ENCODE measurements at regions of chr20 and their contacts with region 1.

Region 1: DNA sequence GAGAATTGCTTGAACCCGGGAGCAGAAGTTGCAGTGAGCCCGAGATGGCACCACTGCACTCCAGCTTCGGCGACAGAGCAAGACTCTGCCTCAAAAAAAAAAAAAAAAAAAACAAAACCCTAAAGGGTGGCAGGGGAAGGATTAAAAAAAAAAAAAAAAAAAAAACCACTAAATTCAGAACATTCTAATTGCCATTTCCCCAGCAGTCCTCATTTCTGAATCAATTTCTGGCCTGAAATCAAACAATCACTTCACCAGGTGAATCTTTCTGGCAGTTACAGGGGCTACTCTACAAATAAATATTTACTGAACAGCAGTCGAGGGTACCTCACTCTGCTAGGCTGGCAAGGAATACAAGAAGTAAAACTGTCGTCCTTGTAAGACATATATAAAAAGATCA is 1.2 kb downstream of the UQCC1 start:
- DNase-seq: no peak
- ATAC-seq: no peak
- H3K4me3 Mint-ChIP-seq: peak overlapping the region; percentile 91
- H3K27ac Mint-ChIP-seq: peak overlapping the region; percentile 100
- H3K4me1 Mint-ChIP-seq: peaks cover 21% of the 10 kb centered on the region
- H3K27me3 Mint-ChIP-seq: no peaks in the 10 kb centered on the region

Region 2: DNA sequence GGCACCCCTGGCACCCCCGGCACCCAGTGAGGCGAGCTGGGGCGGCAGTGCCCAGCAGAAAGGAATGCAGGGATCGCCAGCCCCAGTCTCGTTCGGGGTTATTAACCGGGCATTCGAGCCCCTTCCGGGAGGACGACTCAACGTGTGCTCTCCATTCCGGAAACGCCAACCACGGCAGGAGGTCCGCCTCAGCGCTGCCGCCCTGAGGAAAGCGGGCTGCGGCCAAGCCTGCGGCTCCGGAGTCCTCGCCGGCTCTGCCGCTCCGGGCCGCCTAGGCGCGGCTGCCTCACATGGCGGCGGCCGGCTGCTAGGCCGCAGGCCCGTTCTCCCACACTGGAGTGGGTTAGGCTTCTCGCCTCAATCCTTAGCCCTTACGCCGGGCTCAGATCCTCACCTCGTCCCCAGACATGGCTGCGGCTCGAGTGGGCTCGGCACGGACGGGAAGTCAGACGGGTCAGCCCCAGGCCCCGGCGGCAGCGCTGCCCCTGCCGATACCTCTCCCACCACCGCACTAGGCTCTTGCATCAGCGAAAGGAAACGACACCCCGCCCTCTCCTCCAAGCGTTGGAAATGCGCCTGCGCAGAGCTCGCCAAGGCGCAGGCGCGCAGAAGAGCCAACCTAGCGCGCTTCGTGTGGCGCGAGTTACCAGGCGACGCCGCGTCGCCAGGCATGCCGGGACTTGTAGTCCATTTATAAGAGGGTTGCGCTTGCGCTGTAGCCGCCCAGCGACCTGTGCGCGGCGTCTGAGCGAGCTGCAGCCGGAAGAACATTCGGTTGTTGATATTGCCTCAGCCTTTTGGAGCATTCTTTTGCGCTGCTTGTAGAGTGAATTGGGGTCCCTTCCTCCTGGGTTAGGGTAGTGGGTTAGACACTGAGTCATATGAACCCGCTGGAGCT is 1298.7 kb before region 1 on chr20 and contains the start of gene EIF2S2:
- CTCF ChIA-PET with region 1: no interaction called
- POLR2A ChIA-PET with region 1: no interaction called
- intact Hi-C with region 1: loop called in 1 of 2 experiments (anchors 5 kb)
- DNase-seq: peak; percentile 97
- ATAC-seq: peak; percentile 88
- H3K4me3 Mint-ChIP-seq: peak within 1 kb of the TSS; percentile 86
- H3K27ac Mint-ChIP-seq: peak within 1 kb of the TSS; percentile 97
- H3K4me1 Mint-ChIP-seq: peaks cover 38% of the 10 kb centered on the region
- H3K27me3 Mint-ChIP-seq: no peaks in the 10 kb centered on the region
- total RNA-seq, gene EIF2S2: 179 to 187 TPM

Region 3: DNA sequence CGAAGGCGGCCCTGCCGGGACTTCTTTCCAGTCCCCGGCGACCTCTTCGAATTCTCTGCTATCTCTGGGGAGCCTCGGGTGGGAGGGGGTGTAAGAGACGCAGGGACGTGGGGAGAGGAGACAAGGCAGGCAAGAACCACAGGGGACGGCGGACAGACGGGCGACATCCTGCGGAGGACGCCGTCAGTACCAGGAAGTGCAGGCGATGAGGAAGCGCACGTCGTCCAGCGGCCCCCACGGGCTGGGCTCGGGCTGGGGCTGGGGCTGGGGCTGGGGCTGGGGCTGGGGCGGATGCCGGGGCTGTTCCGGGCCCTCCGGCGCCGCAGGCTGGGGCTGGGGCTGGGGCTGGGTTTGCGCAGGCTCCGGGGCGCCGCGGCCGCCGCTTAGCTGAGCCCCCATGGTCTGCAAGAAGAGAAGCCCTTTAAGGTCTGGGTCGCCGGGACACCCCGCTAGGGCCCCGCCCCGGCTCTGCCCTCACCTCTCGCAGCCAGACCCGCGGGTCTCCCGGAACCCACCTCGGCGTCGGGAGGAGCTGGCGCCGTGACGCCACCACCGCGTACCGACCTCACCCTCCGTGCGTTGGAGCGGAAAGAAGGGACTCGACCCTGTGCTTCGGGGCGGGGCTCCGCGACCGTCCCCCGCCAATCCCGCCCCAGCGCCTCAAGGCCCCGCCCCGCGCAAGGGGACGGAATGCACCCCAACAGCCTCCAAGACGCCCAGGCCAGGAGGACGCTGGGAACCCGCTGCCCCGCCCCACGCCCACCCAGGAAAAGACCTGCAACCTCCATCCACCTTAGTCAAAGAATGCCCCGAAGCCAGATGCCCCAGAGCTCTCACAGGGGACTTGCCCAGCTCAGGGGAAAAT is 132.8 kb before region 1 on chr20 and contains the start of gene MMP24OS:
- CTCF ChIA-PET with region 1: no interaction called
- POLR2A ChIA-PET with region 1: interaction called, 3 read pairs
- intact Hi-C with region 1: loop called in 1 of 2 experiments (anchors 2 kb)
- DNase-seq: peak; percentile 94
- ATAC-seq: peak; percentile 96
- H3K4me3 Mint-ChIP-seq: peak within 1 kb of the TSS; percentile 99
- H3K27ac Mint-ChIP-seq: peak within 1 kb of the TSS; percentile 97
- H3K4me1 Mint-ChIP-seq: peaks cover 9% of the 10 kb centered on the region
- H3K27me3 Mint-ChIP-seq: no peaks in the 10 kb centered on the region
- total RNA-seq, gene MMP24OS: 44.6 to 56.8 TPM

Region 4: DNA sequence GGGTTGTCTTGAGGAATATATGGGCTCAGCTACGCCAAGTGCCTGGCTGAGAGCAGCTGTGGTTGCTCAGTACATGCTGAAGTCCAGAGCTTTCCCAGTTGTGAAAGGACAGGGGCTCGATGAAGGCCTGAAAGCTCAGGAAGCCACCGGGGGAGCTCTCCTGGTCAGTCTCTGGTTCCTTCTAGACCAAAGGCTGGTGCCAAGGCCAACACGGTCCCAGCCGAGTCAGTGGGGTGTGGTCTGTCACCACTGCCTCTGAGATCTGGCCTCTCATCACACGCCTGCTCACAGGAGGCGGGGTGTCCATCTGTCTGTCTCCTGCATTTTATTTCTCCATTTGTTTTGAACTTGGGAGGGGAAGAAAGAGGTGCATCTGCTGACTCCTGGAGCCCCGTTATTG is 113.5 kb before region 1 on chr20:
- CTCF ChIA-PET with region 1: no interaction called
- POLR2A ChIA-PET with region 1: no interaction called
- intact Hi-C with region 1: no loop called
- DNase-seq: no peak
- ATAC-seq: no peak
- H3K4me3 Mint-ChIP-seq: no peak overlapping the region
- H3K27ac Mint-ChIP-seq: no peak overlapping the region
- H3K4me1 Mint-ChIP-seq: no peaks in the 10 kb centered on the region
- H3K27me3 Mint-ChIP-seq: no peaks in the 10 kb centered on the region

Region 5: DNA sequence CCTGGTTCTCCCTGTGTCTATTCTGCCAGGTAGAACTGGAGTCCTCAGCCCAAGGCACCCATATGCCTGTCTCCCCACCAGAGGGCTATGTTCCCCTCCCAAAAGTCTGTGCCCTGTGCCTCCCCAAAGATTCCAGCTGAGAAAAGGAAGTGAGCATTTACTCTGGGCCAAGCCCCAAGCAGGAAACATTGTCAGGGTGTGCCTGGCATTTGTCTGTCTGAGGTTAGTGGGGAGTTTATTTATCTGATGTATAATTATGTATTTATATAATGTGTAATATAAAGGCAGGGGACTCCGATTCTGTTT is 21.8 kb after region 1 on chr20:
- CTCF ChIA-PET with region 1: no interaction called
- POLR2A ChIA-PET with region 1: no interaction called
- intact Hi-C with region 1: no loop called
- DNase-seq: no peak
- ATAC-seq: no peak
- H3K4me3 Mint-ChIP-seq: no peak overlapping the region
- H3K27ac Mint-ChIP-seq: no peak overlapping the region
- H3K4me1 Mint-ChIP-seq: peaks cover 5% of the 10 kb centered on the region
- H3K27me3 Mint-ChIP-seq: no peaks in the 10 kb centered on the region

Region 6: GRCh38 chr20:35447082-35447789 is 36.6 kb after region 1 on chr20:
- CTCF ChIA-PET with region 1: interaction called, 4 read pairs
- POLR2A ChIA-PET with region 1: no interaction called
- intact Hi-C with region 1: loop called in 1 of 2 experiments (anchors 2 kb)
- DNase-seq: peak; percentile 95
- ATAC-seq: peak; percentile 99
- H3K4me3 Mint-ChIP-seq: peak overlapping the region; percentile 78
- H3K27ac Mint-ChIP-seq: peak overlapping the region; percentile 58
- H3K4me1 Mint-ChIP-seq: peaks cover 7% of the 10 kb centered on the region
- H3K27me3 Mint-ChIP-seq: no peaks in the 10 kb centered on the region

Region 7: DNA sequence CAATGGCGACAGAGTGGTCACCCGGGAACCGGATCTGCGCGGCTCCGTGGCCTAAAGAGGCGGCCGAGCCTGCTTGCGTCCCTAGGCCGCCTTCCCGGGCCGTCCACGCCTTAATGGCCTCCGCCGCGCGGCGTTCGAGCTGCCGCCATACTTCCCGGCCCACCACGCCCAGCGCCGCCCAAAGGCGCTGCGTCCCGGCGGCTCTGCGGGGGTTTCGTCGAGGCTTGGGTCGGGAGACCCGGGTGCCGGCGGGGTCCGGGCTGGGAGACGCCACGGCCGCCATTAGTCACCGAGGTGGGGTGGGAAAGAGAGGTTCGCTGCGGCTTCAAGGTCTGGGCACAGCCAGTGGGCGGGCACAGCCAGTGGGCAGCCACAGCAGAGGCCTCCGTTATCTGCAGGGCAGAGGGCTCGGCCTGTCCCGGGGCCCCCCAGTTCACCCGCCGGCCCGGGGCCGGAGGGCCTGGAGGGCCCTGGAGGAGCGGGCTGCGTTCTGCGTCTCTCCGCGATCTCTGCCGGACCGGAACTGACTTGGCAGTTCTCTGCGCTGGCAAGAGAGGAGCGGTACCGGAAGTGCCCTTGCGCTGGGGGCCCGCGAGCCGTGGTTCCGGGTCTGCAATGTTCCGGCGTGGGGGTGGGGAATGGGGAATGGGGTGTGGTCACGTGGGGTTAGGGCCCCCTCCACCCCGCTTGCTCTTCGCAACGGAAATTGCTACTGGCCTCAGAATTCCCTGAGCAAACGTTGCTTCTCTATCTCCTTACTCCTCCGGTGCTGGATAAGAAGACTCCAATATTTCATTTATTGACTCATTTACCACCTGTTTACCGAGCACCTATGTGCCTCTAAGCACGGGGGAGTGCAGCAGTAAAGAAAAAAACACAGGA is 640.1 kb after region 1 on chr20:
- CTCF ChIA-PET with region 1: no interaction called
- POLR2A ChIA-PET with region 1: no interaction called
- intact Hi-C with region 1: loop called in 1 of 2 experiments (anchors 1 kb)
- DNase-seq: peak; percentile 95
- ATAC-seq: peak; percentile 98
- H3K4me3 Mint-ChIP-seq: peak overlapping the region; percentile 96
- H3K27ac Mint-ChIP-seq: peak overlapping the region; percentile 91
- H3K4me1 Mint-ChIP-seq: peaks cover 34% of the 10 kb centered on the region
- H3K27me3 Mint-ChIP-seq: no peaks in the 10 kb centered on the region

Measured in activated CD4-positive, alpha-beta T cell treated with anti-CD3 and anti-CD28 coated beads for 36 hours (primary cell).